Breast epithelium (tissue), 4 donors: ENCODE measurements at regions of chr10 and their contacts with region 1.

Region 1: GRCh38 chr10:103244663-103245271 is 920 bp upstream of the RPEL1 start:
- DNase-seq: peak; percentile 66 to 76
- H3K4me3 ChIP-seq: no peak overlapping the region
- H3K27ac ChIP-seq: no peak overlapping the region
- H3K4me1 ChIP-seq: no peaks in the 10 kb centered on the region
- H3K27me3 ChIP-seq: no peaks in the 10 kb centered on the region
- CTCF ChIP-seq: peak; percentile 85 to 91 (median 91)
- POLR2A ChIP-seq: no peak

Region 2: GRCh38 chr10:102435529-102436233 is 809.1 kb before region 1 on chr10:
- intact Hi-C with region 1: loop called (anchors 5 kb)
- DNase-seq: no peak
- H3K4me3 ChIP-seq: peak overlapping the region; percentile 17 to 68 (median 49)
- H3K27ac ChIP-seq: peak overlapping the region; percentile 63 to 88
- H3K4me1 ChIP-seq: peaks cover 6% of the 10 kb centered on the region in 2 donors
- H3K27me3 ChIP-seq: no peaks in the 10 kb centered on the region
- CTCF ChIP-seq: no peak
- POLR2A ChIP-seq: no peak

Region 3: GRCh38 chr10:102917962-102918816 is 326.6 kb before region 1 on chr10 and contains the start of gene CNNM2:
- intact Hi-C with region 1: loop called (anchors 10 kb)
- DNase-seq: peak; percentile 99 to 100
- H3K4me3 ChIP-seq: peak within 1 kb of the TSS; percentile 74 to 96 (median 95)
- H3K27ac ChIP-seq: peak within 1 kb of the TSS; percentile 91
- H3K4me1 ChIP-seq: peaks cover 0 to 19% of the 10 kb centered on the region in 2 donors
- H3K27me3 ChIP-seq: no peaks in the 10 kb centered on the region
- CTCF ChIP-seq: no peak
- POLR2A ChIP-seq: peak; percentile 16
- total RNA-seq, gene CNNM2: 6.4 to 7.2 (median 6.7) TPM

Region 4: DNA sequence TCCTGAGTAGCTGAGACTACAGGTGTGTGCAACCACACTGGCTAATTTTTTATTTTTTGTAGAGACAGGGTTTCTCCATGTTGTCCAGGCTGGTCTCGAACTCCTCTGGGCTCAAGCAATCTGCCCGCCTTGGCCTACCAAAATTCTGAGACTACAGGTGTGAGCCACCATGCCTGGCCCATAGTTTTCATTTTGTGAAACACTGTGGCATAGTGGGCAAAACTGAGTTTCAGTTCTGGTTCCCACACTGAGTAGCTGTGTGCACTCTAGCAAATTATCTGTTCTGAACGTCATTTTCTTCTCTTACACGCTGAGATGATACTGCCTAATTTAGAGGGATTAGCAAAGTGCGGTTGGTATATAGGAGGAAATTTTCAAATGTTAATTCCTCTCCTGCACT is 138.0 kb after region 1 on chr10:
- intact Hi-C with region 1: no loop called
- DNase-seq: no peak
- H3K4me3 ChIP-seq: no peak overlapping the region
- H3K27ac ChIP-seq: no peak overlapping the region
- H3K4me1 ChIP-seq: no peaks in the 10 kb centered on the region
- H3K27me3 ChIP-seq: no peaks in the 10 kb centered on the region
- CTCF ChIP-seq: no peak
- POLR2A ChIP-seq: no peak